ENCODE measurements at regions of chr4 and their contacts with region 1.

Region 1: GRCh38 chr4:38759113-38759789 is 23.5 kb downstream of the TLR10 start:
- H3K4me3 ChIP-seq: no peak overlapping the region
- H3K27ac ChIP-seq: no peak overlapping the region
- H3K4me1 ChIP-seq: no peaks in the 10 kb centered on the region
- CTCF ChIP-seq: no peak

Region 2: DNA sequence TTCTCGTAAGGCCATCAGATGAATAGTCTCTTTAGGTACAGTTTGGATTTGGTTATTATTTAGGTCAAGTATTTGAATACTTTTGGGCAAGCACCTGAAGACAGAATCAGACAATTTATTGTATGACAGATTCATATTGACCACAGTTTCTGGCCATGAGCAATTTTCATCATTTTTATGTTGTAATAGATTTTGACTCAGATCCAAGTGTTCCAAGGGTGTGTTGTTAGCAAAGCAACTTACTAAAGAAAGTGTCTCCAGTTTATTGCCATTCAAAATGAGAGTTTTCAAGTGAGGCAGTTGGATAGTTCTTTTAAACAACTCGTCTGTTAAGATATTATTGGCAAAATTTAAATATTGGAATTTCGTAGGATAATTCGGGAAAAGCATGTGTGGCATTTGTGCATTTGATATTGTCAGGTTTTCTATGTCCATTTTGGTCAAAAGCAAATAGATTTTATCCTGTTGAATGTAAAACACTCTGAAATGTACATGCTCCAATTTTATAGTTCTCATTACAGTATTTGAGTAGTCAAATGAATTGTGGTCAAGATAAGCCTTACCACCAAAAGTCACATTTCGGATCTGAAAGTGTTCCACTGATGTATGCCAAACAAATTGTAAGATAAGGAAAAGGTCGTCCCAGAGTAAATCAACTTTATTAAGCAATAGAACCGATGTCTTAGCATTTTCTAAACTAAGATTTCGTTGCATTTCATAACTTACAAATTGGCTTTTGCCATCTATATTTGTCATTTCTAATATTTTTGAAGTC is 15.1 kb after region 1 on chr4:
- CTCF ChIA-PET with region 1: interaction called, 15 read pairs
- POLR2A ChIA-PET with region 1: no interaction called
- H3K4me3 ChIP-seq: no peak overlapping the region
- H3K27ac ChIP-seq: no peak overlapping the region
- H3K4me1 ChIP-seq: no peaks in the 10 kb centered on the region
- CTCF ChIP-seq: no peak

Region 3: DNA sequence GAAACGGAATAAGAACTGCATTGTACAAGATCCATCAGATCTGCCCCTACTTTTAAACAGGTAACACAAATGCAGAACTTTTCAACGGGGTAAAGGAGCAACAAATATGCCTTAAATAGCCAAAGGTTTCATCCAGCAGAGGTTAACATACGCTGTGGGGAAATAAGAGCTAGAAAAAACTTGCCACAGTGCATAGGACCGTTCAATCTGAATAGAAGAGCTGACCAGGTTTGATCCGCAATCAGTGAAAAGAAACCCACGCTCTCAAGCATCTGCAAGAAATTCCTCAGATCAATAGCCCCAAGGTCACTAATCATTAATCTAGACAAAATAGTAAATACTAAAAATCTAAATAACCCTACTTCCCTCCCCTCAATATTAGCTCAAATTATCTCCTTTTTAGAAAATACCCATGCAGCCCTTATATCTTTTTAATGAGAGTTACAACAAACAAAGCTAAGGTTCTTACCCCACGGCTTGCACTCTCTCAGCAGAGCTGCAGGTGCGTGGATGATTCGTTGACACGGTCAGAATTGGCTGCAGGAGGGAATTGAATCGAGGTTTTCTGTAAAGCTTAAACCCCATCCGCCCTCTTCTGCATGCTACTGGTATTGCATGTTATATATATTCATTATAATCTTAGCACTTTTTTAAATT is 23.3 kb after region 1 on chr4 and contains the start of gene TLR10:
- CTCF ChIA-PET with region 1: interaction called, 24 read pairs
- POLR2A ChIA-PET with region 1: no interaction called
- H3K4me3 ChIP-seq: no peak within 1 kb of the TSS
- H3K27ac ChIP-seq: no peak within 1 kb of the TSS
- H3K4me1 ChIP-seq: no peaks in the 10 kb centered on the region
- CTCF ChIP-seq: no peak

Region 4: DNA sequence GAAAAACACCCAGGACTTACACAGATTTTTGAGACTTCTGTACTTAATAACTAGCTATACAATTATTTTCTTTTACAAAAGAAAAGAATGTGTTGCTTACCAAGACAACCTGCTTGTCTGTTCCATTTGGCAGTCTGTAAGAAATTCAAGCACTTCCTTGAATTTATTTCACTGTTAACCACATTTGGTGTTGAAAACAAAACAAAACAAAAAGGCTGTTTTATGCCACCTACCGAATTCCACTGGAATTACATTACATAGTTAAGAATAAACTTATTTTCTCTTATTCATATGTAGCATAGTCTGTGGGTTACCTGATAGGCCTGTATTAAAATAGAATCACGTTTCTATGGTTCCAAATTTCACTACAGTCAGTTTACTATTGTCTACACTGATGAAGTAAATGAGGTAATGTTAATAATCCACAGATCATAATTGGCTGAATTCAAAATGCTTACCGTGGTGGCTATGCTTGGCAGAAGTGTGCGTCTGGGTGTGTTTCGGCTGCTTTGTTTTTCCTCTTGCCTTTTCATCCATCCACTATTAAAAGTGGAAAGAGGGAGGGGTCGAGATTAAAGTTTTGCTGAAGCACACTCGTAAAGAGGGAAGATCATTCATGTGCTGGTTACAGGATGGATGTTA is 45.5 kb after region 1 on chr4 and contains the start of gene TLR1:
- CTCF ChIA-PET with region 1: interaction called, 11 read pairs
- POLR2A ChIA-PET with region 1: no interaction called
- H3K4me3 ChIP-seq: no peak within 1 kb of the TSS
- H3K27ac ChIP-seq: no peak within 1 kb of the TSS
- H3K4me1 ChIP-seq: no peaks in the 10 kb centered on the region
- CTCF ChIP-seq: no peak

Region 5: DNA sequence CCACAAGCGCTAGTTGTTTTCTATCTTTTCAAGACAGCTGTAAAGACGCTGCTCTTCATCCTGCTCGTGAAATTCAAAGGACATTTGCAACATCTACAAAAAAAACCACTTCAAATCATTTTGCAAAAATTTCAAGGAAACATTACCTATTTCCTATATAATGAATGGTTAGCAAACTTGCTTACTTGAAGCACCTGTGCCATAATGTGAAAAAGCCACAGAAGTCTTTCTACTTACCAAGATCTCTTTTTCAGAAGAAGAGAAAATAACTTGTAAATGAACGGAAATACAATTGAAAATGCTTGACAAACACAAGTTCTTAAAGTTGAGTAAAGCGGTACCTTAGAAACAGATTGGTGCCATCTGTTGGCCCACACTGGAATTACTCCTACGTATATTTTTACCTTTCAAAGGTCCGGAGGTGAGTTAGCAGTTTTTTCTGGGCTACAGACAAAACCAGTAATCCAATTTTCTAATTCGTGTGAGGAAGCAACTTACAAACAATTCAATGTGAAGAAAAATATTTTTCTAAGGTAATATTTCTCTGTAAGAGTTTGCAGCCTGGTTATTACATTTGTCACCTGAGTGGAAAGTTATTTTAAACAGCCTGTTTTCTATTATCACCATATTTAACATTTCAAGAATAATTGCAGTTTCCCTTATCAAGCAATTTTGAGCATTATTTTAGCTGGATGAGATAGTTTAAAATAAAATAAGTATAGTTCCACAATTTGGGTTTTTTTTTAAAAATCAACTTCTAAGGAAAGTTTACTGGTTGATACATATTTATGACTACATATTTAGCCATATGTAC is 97.5 kb after region 1 on chr4 and contains the start of gene TLR6:
- CTCF ChIA-PET with region 1: interaction called, 44 read pairs
- POLR2A ChIA-PET with region 1: no interaction called
- H3K4me3 ChIP-seq: no peak within 1 kb of the TSS
- H3K27ac ChIP-seq: no peak within 1 kb of the TSS
- H3K4me1 ChIP-seq: no peaks in the 10 kb centered on the region
- CTCF ChIP-seq: no peak

Region 6: GRCh38 chr4:39020130-39020529 is 260.9 kb after region 1 on chr4:
- CTCF ChIA-PET with region 1: no interaction called
- POLR2A ChIA-PET with region 1: no interaction called
- H3K4me3 ChIP-seq: no peak overlapping the region
- H3K27ac ChIP-seq: no peak overlapping the region
- H3K4me1 ChIP-seq: no peaks in the 10 kb centered on the region
- CTCF ChIP-seq: no peak

Measured in HEK293 (cell line).